Common myeloid progenitor, CD34-positive (primary cell): ENCODE measurements at regions of chr1 and their contacts with region 1.

Region 1: GRCh38 chr1:115980998-115981993 is 5.0 kb downstream of the SLC22A15 start:
- DNase-seq: peak; percentile 48 to 54 (median 52)
- H3K4me3 ChIP-seq: no peak overlapping the region
- H3K27ac ChIP-seq: no peak overlapping the region
- H3K4me1 ChIP-seq: peaks cover 2 to 37% (median 10%) of the 10 kb centered on the region in 4 experiments
- H3K27me3 ChIP-seq: no peaks in the 10 kb centered on the region

Region 2: DNA sequence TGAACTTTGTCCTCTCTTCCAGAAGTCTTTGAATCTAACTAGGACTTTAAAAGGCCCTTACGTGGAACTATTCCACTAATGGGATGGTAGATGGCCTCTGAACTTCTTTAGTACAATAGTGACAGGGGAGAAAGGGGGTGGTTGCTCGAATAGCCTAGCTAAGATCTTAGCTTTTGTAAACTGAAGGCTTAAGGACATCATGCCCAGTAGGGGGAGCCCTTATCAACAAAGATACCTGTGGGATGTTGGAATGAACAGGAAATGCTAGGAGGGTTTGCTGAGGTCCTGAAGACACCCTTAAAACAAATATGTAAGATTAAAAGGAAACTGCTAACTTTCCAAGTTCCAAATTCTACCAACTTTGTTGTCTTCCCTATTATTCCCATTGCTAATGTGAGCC is 173.6 kb before region 1 on chr1:
- CTCF ChIA-PET with region 1: interaction called, 21 read pairs
- POLR2A ChIA-PET with region 1: no interaction called
- DNase-seq: peak; percentile 72 to 77 (median 75)
- H3K4me3 ChIP-seq: no peak overlapping the region
- H3K27ac ChIP-seq: no peak overlapping the region
- H3K4me1 ChIP-seq: peaks cover 0 to 10% (median 0%) of the 10 kb centered on the region in 4 experiments
- H3K27me3 ChIP-seq: no peaks in the 10 kb centered on the region

Region 3: GRCh38 chr1:115890580-115890979 is 90.7 kb before region 1 on chr1:
- CTCF ChIA-PET with region 1: no interaction called
- POLR2A ChIA-PET with region 1: no interaction called
- DNase-seq: no peak
- H3K4me3 ChIP-seq: no peak overlapping the region
- H3K27ac ChIP-seq: no peak overlapping the region
- H3K4me1 ChIP-seq: no peaks in the 10 kb centered on the region
- H3K27me3 ChIP-seq: no peaks in the 10 kb centered on the region

Region 4: GRCh38 chr1:115991909-115992308 is 10.6 kb after region 1 on chr1:
- CTCF ChIA-PET with region 1: interaction called, 11 read pairs
- POLR2A ChIA-PET with region 1: no interaction called
- DNase-seq: no peak
- H3K4me3 ChIP-seq: no peak overlapping the region
- H3K27ac ChIP-seq: no peak overlapping the region
- H3K4me1 ChIP-seq: no peaks in the 10 kb centered on the region
- H3K27me3 ChIP-seq: no peaks in the 10 kb centered on the region